Caco-2 (cell line): ENCODE measurements at regions of chr10 and their contacts with region 1.

Region 1: GRCh38 chr10:109200646-109201045 is 722.7 kb downstream of the XPNPEP1 start:
- DNase-seq: no peak
- H3K4me3 ChIP-seq: no peak overlapping the region
- H3K4me3 Mint-ChIP-seq: no peak overlapping the region
- H3K27ac Mint-ChIP-seq: peak overlapping the region; percentile 74
- H3K4me1 ChIP-seq: peaks cover 24% of the 10 kb centered on the region
- H3K4me1 Mint-ChIP-seq: peaks cover 14% of the 10 kb centered on the region
- H3K27me3 ChIP-seq: no peaks in the 10 kb centered on the region
- H3K27me3 Mint-ChIP-seq: no peaks in the 10 kb centered on the region
- CTCF ChIP-seq: no peak

Region 2: GRCh38 chr10:109306698-109307097 is 106.1 kb after region 1 on chr10:
- CTCF ChIA-PET with region 1: no interaction called
- POLR2A ChIA-PET with region 1: no interaction called
- intact Hi-C with region 1: loop called (anchors 1 kb)
- DNase-seq: peak in 1 of 2 experiments; percentile 21
- H3K4me3 ChIP-seq: no peak overlapping the region
- H3K4me3 Mint-ChIP-seq: peak overlapping the region; percentile 61
- H3K27ac Mint-ChIP-seq: peak overlapping the region; percentile 73
- H3K4me1 ChIP-seq: peaks cover 64% of the 10 kb centered on the region
- H3K4me1 Mint-ChIP-seq: peaks cover 48% of the 10 kb centered on the region
- H3K27me3 ChIP-seq: no peaks in the 10 kb centered on the region
- H3K27me3 Mint-ChIP-seq: no peaks in the 10 kb centered on the region
- CTCF ChIP-seq: no peak